Heart right ventricle (tissue), 16 donors: ENCODE measurements at regions of chr12 and their contacts with region 1.

Region 1: DNA sequence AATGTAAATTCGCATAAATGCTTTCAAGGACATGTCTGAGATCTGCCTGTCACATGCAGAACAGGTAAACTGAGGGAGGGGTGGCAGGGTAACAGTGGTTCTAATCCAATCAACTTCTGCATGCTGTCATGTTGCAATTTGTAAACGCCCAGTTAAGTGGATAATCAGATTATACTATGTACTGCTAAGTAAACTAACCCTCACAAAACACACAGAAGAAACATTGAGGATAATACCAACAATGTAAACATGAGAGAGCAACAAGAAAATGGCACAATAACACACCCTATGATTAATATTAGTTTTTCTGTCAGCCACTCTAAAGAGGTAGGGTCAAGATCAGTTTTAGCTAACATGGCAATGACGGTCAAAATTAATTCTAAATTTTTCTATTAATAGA is 123.7 kb downstream of the KIF21A start:
- DNase-seq: no peak
- ATAC-seq: no peak
- H3K4me3 ChIP-seq: no peak overlapping the region
- H3K27ac ChIP-seq: no peak overlapping the region
- H3K4me1 ChIP-seq: no peaks in the 10 kb centered on the region
- H3K27me3 ChIP-seq: no peaks in the 10 kb centered on the region
- CTCF ChIP-seq: no peak

Region 2: GRCh38 chr12:39364196-39364595 is 45.0 kb after region 1 on chr12:
- intact Hi-C with region 1: loop called in 1 of 10 experiments (anchors 5 kb)
- DNase-seq: no peak
- ATAC-seq: no peak
- H3K4me3 ChIP-seq: no peak overlapping the region
- H3K27ac ChIP-seq: no peak overlapping the region
- H3K4me1 ChIP-seq: no peaks in the 10 kb centered on the region
- H3K27me3 ChIP-seq: no peaks in the 10 kb centered on the region
- CTCF ChIP-seq: no peak